Activated CD8-positive, alpha-beta T cell treated with anti-CD3 and anti-CD28 coated beads for 36 hours (primary cell): ENCODE measurements at regions of chr9 and their contacts with region 1.

Region 1: GRCh38 chr9:93453047-93453914 is at the start of gene FAM120AOS:
- DNase-seq: peak; percentile 95
- ATAC-seq: peak; percentile 62
- H3K4me3 Mint-ChIP-seq: peak within 1 kb of the TSS; percentile 78
- H3K27ac Mint-ChIP-seq: peak within 1 kb of the TSS; percentile 86
- H3K4me1 Mint-ChIP-seq: peaks cover 48% of the 10 kb centered on the region
- H3K27me3 Mint-ChIP-seq: no peaks in the 10 kb centered on the region
- CTCF ChIP-seq: no peak
- total RNA-seq, gene FAM120AOS: 32.8 to 36.4 TPM

Region 2: GRCh38 chr9:93369686-93370085 is 83.6 kb before region 1 on chr9:
- CTCF ChIA-PET with region 1: no interaction called
- POLR2A ChIA-PET with region 1: no interaction called
- intact Hi-C with region 1: no loop called
- DNase-seq: no peak
- ATAC-seq: no peak
- H3K4me3 Mint-ChIP-seq: no peak overlapping the region
- H3K27ac Mint-ChIP-seq: no peak overlapping the region
- H3K4me1 Mint-ChIP-seq: no peaks in the 10 kb centered on the region
- H3K27me3 Mint-ChIP-seq: peaks cover 12% of the 10 kb centered on the region
- CTCF ChIP-seq: no peak

Region 3: GRCh38 chr9:93464395-93464794 is 11.1 kb after region 1 on chr9:
- CTCF ChIA-PET with region 1: interaction called, 21 read pairs
- POLR2A ChIA-PET with region 1: interaction called, 31 read pairs
- intact Hi-C with region 1: no loop called
- DNase-seq: no peak
- ATAC-seq: no peak
- H3K4me3 Mint-ChIP-seq: peak overlapping the region; percentile 42
- H3K27ac Mint-ChIP-seq: peak overlapping the region; percentile 90
- H3K4me1 Mint-ChIP-seq: peaks cover 85% of the 10 kb centered on the region
- H3K27me3 Mint-ChIP-seq: no peaks in the 10 kb centered on the region
- CTCF ChIP-seq: no peak

Region 4: GRCh38 chr9:93531374-93531773 is 78.1 kb after region 1 on chr9:
- CTCF ChIA-PET with region 1: no interaction called
- POLR2A ChIA-PET with region 1: no interaction called
- intact Hi-C with region 1: no loop called
- DNase-seq: no peak
- ATAC-seq: no peak
- H3K4me3 Mint-ChIP-seq: no peak overlapping the region
- H3K27ac Mint-ChIP-seq: no peak overlapping the region
- H3K4me1 Mint-ChIP-seq: peaks cover 2% of the 10 kb centered on the region
- H3K27me3 Mint-ChIP-seq: no peaks in the 10 kb centered on the region
- CTCF ChIP-seq: no peak

Region 5: GRCh38 chr9:93950619-93951601 is 497.6 kb after region 1 on chr9:
- CTCF ChIA-PET with region 1: no interaction called
- POLR2A ChIA-PET with region 1: no interaction called
- intact Hi-C with region 1: no loop called
- DNase-seq: peak; percentile 20
- ATAC-seq: no peak
- H3K4me3 Mint-ChIP-seq: peak overlapping the region; percentile 54
- H3K27ac Mint-ChIP-seq: no peak overlapping the region
- H3K4me1 Mint-ChIP-seq: peaks cover 47% of the 10 kb centered on the region
- H3K27me3 Mint-ChIP-seq: peaks cover 78% of the 10 kb centered on the region
- CTCF ChIP-seq: no peak